Activated CD4-positive, alpha-beta memory T cell treated with anti-CD3 and anti-CD28 coated beads for 36 hours (primary cell): ENCODE measurements at regions of chr6 and their contacts with region 1.

Region 1: GRCh38 chr6:25017932-25018567 is 82.3 kb upstream of the RIPOR2 start:
- DNase-seq: peak; percentile 90
- H3K4me3 Mint-ChIP-seq: peak overlapping the region; percentile 42
- H3K27ac Mint-ChIP-seq: peak overlapping the region; percentile 86
- H3K4me1 Mint-ChIP-seq: peaks cover 69% of the 10 kb centered on the region
- H3K27me3 Mint-ChIP-seq: no peaks in the 10 kb centered on the region

Region 2: DNA sequence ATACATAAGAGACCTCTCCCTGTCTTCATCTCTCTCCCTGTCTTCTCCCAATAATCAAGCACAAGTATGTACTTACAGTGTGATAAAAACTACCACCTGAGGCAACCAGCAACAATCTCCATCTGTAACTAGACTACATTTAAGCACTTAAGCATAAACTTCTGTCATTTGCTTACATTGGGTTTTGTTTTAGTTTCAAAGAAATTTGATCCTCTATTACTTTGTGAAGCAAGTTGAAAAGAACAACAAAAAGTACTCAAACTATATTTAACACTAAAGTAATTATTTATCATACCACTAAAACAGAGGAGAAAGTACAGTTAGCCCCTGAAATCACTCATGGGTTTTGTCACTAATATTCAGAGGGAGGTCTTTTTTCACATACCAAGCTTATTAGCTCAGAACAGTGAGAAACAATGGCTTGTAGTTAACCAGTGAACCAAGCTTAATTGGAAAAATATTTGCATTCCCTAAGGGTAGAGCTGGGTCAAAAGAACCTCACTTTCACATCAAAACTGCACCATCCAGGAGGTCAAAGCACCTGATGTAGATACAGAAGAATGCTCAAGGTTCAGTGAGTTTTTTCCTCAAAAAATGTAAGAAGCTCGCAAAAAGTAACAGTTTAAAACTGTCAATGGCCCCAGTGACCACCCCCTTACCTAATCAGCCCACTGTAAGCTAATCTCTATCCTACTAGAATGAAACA is 694.3 kb before region 1 on chr6:
- CTCF ChIA-PET with region 1: no interaction called
- POLR2A ChIA-PET with region 1: no interaction called
- intact Hi-C with region 1: no loop called
- DNase-seq: no peak
- H3K4me3 Mint-ChIP-seq: no peak overlapping the region
- H3K27ac Mint-ChIP-seq: no peak overlapping the region
- H3K4me1 Mint-ChIP-seq: no peaks in the 10 kb centered on the region
- H3K27me3 Mint-ChIP-seq: peaks cover 18% of the 10 kb centered on the region

Region 3: GRCh38 chr6:24699521-24700359 is 318.3 kb before region 1 on chr6:
- CTCF ChIA-PET with region 1: interaction called, 7 read pairs
- POLR2A ChIA-PET with region 1: no interaction called
- intact Hi-C with region 1: loop called (anchors 5 kb)
- DNase-seq: no peak
- H3K4me3 Mint-ChIP-seq: no peak overlapping the region
- H3K27ac Mint-ChIP-seq: peak overlapping the region; percentile 88
- H3K4me1 Mint-ChIP-seq: peaks cover 61% of the 10 kb centered on the region
- H3K27me3 Mint-ChIP-seq: no peaks in the 10 kb centered on the region

Region 4: GRCh38 chr6:24774696-24775519 is 243.1 kb before region 1 on chr6 and contains the start of gene GMNN:
- CTCF ChIA-PET with region 1: interaction called, 9 read pairs
- POLR2A ChIA-PET with region 1: no interaction called
- intact Hi-C with region 1: loop called (anchors 2 kb)
- DNase-seq: peak; percentile 98
- H3K4me3 Mint-ChIP-seq: peak within 1 kb of the TSS; percentile 99
- H3K27ac Mint-ChIP-seq: peak within 1 kb of the TSS; percentile 100
- H3K4me1 Mint-ChIP-seq: peaks cover 27% of the 10 kb centered on the region
- H3K27me3 Mint-ChIP-seq: no peaks in the 10 kb centered on the region
- total RNA-seq, gene GMNN: 76.5 to 77.4 TPM

Region 5: DNA sequence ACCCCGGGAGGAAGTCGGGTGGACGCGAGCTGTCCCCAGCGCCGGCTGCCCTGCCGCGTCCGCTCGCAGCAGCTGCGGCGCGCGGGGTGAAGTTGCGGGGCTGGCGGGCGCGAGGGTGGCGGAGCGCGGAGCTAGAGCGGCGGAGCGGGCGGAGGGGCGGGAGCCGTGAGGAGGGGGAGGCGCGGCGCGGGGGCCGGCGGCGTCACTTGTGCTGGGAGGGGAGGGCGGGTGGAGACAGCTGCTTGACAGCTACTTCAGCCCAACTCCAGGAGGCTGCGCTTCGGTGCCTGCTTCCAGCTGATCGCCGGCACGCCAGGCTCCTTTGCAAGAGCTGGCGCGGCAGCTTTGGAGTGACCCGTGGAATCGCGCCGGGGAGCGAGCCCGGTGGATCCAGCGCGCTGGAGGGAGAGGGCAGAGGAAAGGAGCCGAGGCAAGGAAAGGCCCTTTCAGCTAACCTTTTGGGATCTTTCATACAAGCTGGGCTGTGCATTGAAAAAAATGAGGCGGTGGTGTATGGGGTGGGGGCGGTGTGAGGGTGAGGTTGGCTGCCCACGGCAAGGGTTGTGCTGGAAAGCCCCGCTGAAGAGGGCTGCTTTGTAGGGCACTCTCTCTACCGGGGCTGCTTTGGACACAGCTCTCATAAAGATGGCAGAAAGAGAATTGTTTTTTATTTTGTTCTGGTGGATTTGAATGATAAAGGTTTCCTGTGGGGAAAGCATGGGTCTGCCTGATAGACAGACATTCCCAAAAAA is 106.9 kb before region 1 on chr6:
- CTCF ChIA-PET with region 1: interaction called, 22 read pairs
- POLR2A ChIA-PET with region 1: interaction called, 3 read pairs
- intact Hi-C with region 1: no loop called
- DNase-seq: peak; percentile 70
- H3K4me3 Mint-ChIP-seq: peak overlapping the region; percentile 91
- H3K27ac Mint-ChIP-seq: peak overlapping the region; percentile 95
- H3K4me1 Mint-ChIP-seq: peaks cover 85% of the 10 kb centered on the region
- H3K27me3 Mint-ChIP-seq: no peaks in the 10 kb centered on the region

Region 6: GRCh38 chr6:25035527-25036435 is 17.7 kb after region 1 on chr6:
- CTCF ChIA-PET with region 1: interaction called, 110 read pairs
- POLR2A ChIA-PET with region 1: interaction called, 4 read pairs
- intact Hi-C with region 1: no loop called
- DNase-seq: peak; percentile 40
- H3K4me3 Mint-ChIP-seq: peak overlapping the region; percentile 86
- H3K27ac Mint-ChIP-seq: peak overlapping the region; percentile 90
- H3K4me1 Mint-ChIP-seq: peaks cover 60% of the 10 kb centered on the region
- H3K27me3 Mint-ChIP-seq: no peaks in the 10 kb centered on the region

Region 7: GRCh38 chr6:25070547-25071366 is 52.7 kb after region 1 on chr6:
- CTCF ChIA-PET with region 1: interaction called, 91 read pairs
- POLR2A ChIA-PET with region 1: no interaction called
- intact Hi-C with region 1: loop called (anchors 1 kb)
- DNase-seq: peak; percentile 90
- H3K4me3 Mint-ChIP-seq: peak overlapping the region; percentile 44
- H3K27ac Mint-ChIP-seq: peak overlapping the region; percentile 78
- H3K4me1 Mint-ChIP-seq: peaks cover 10% of the 10 kb centered on the region
- H3K27me3 Mint-ChIP-seq: no peaks in the 10 kb centered on the region

Region 8: DNA sequence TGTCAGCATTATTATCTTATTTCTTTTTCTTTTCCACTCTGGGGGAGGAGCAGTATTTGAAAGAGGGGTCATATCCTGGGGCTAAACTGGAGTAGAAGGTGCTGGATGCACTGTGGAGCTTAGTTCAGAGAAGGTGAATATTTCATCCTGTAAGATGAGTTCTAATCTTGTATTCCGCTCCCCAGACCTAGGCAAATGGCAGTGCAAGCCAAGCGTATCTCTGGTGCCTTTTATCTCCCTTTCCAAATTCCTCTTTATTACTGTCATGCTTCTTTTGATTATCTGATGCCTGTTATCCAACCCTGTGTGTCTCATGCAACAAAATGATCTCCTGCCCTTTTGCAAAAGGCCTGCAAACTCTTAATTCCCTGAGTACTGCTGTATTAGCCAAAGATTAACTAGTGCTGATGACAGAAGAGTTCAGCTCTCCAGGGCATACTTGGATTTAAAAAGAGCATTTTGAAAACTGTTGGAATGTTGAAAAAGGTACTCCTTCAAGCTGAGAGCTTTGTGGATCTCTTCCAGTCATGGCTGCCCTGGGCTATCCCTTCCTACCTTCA is 399.1 kb after region 1 on chr6:
- CTCF ChIA-PET with region 1: no interaction called
- POLR2A ChIA-PET with region 1: no interaction called
- intact Hi-C with region 1: no loop called
- DNase-seq: no peak
- H3K4me3 Mint-ChIP-seq: no peak overlapping the region
- H3K27ac Mint-ChIP-seq: no peak overlapping the region
- H3K4me1 Mint-ChIP-seq: peaks cover 15% of the 10 kb centered on the region
- H3K27me3 Mint-ChIP-seq: no peaks in the 10 kb centered on the region